ENCODE measurements at regions of chr22 and their contacts with region 1.

Region 1: GRCh38 chr22:39306581-39307361 is 12.7 kb downstream of the RPL3 start:
- DNase-seq: no peak
- ATAC-seq: no peak
- H3K4me3 ChIP-seq: no peak overlapping the region
- H3K27ac ChIP-seq: no peak overlapping the region
- H3K4me1 ChIP-seq: peaks cover 52 to 64% of the 10 kb centered on the region in 2 experiments
- H3K27me3 ChIP-seq: no peaks in the 10 kb centered on the region
- CTCF ChIP-seq: peak in 2 of 3 experiments; percentile 53 to 75; a peak in 4 of 6 replicates
- POLR2A ChIP-seq: no peak
- RAD21 ChIP-seq: no peak

Region 2: DNA sequence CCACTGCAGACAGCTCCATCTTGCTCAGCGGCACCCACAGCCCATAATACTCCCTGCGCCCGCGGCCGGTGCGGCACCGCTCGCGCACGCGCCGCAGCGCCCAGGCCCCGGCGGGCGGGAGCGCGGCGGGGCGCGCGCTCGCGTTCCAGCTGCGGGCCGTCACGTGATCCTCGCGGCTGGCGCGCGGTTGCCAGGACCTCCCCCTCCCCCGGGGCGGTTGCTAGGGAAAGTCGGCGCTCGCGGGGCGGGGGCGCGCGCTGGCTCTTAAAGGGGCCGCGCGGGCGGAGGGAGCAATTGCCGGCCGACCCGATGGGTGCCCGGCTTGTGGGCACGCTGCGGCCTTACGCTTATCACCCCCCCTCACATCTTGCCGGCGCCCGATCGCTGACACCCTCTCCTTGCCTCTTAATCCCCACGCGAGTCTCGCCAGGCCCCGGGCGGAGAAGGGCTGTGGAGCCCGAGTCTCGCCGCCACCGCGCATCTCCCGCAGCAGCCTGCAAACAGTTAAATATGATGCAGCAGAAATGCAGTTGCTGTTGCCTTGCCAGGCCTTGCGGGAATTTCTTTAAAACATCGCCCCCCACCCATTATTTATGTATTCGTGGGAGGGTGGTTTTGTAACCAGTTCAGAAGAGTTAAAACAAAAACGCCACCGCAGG is 434.5 kb before region 1 on chr22 and contains the start of gene CBX6:
- CTCF ChIA-PET with region 1: no interaction called
- POLR2A ChIA-PET with region 1: no interaction called
- RAD21 ChIA-PET with region 1: no interaction called
- intact Hi-C with region 1: loop called (anchors 5 kb)
- DNase-seq: peak; percentile 78
- ATAC-seq: peak; percentile 76
- H3K4me3 ChIP-seq: peak within 1 kb of the TSS; percentile 61 to 86
- H3K27ac ChIP-seq: peak within 1 kb of the TSS; percentile 84
- H3K4me1 ChIP-seq: peaks cover 11 to 45% of the 10 kb centered on the region in 2 experiments
- H3K27me3 ChIP-seq: no peaks in the 10 kb centered on the region
- CTCF ChIP-seq: no peak
- POLR2A ChIP-seq: no peak
- RAD21 ChIP-seq: no peak
- total RNA-seq, gene CBX6: 90.0 TPM

Region 3: DNA sequence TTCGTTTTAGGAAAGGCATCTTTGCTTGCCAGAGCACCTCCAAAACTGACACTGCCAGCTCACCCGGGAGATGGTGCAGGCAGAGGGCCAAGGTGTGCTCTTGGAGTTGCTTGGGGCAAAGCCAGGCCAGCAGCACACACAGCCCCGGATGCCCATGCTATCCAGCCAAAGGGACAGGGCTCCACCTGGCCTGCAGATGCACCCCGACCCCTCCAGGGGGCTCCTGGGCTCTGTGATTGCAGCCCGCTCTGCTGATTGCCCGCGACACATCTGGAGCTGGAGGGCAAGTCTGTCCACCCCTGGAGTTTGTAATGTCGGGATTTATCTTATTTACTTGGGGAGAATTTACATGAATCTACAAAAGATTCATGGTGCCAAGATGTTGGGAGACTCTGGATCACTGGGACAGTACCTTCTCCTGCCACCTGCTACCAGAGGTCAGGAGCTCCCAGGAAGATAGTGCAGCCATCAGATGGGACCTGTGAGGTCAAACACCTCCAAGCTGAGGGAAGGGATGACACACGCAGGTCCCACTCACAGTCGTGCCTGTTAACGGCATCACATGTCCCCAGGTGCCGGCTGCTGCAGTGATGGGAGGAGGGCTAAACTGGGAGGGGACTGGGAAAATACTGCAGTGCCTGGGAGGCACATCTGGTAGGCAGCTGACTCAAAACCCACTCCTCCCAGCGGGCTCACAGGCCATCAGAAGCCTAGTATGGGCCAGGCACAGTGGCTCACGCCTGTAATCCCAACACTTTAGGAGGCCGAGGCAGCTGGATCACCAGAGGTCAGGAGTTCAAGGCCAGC is 171.5 kb before region 1 on chr22:
- CTCF ChIA-PET with region 1: interaction called, 19 read pairs
- POLR2A ChIA-PET with region 1: interaction called, 5 read pairs
- RAD21 ChIA-PET with region 1: interaction called in 1 of 2 experiments, 6 read pairs
- intact Hi-C with region 1: loop called (anchors 1 kb)
- DNase-seq: peak; percentile 7
- ATAC-seq: peak; percentile 95
- H3K4me3 ChIP-seq: no peak overlapping the region
- H3K27ac ChIP-seq: no peak overlapping the region
- H3K4me1 ChIP-seq: no peaks in the 10 kb centered on the region; a peak in 1 of 4 replicates
- H3K27me3 ChIP-seq: no peaks in the 10 kb centered on the region
- CTCF ChIP-seq: peak; percentile 55 to 81 (median 76)
- POLR2A ChIP-seq: no peak
- RAD21 ChIP-seq: peak; percentile 80

Region 4: GRCh38 chr22:39197396-39197977 is 109.3 kb before region 1 on chr22:
- CTCF ChIA-PET with region 1: no interaction called
- POLR2A ChIA-PET with region 1: no interaction called
- RAD21 ChIA-PET with region 1: no interaction called
- intact Hi-C with region 1: no loop called
- DNase-seq: no peak
- ATAC-seq: no peak
- H3K4me3 ChIP-seq: no peak overlapping the region
- H3K27ac ChIP-seq: no peak overlapping the region
- H3K4me1 ChIP-seq: peaks cover under 1% of the 10 kb centered on the region in 2 experiments; a peak in 1 of 4 replicates
- H3K27me3 ChIP-seq: no peaks in the 10 kb centered on the region
- CTCF ChIP-seq: no peak
- POLR2A ChIP-seq: no peak
- RAD21 ChIP-seq: no peak

Region 5: DNA sequence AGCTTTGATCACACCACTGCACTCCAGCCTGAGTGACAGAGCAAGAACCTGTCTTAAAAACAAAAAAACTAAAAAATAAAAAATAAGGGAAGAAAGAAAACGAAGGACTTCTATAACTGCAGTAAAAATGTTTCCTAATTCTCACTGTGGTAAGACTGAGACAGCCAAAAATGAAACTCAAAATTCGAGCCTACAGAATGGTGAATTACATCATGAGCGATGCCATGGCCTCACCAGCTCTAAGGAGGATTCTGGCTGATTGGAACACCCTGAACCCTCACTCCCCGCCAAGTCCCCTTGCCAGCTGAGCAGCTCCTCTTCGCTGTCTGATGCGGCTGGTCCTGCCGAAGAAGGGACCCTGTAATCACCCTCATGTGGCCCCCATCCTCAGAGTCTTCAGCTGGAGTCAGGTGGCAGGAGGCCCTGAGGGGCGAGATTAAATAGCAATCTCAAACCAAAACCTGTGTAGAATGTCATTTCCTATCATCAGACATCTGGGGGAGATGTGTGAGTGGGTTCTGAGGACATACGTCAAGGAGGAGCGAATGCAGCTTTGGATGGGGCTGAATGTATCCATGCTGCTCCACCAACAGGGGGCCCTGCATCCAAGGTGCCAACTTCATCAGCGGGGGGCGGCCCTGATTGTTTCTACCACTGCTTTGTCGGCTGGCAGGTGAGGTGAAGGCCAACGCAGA is 91.2 kb before region 1 on chr22:
- CTCF ChIA-PET with region 1: interaction called, 9 read pairs
- POLR2A ChIA-PET with region 1: interaction called, 10 read pairs
- RAD21 ChIA-PET with region 1: interaction called, 3 read pairs
- intact Hi-C with region 1: no loop called
- DNase-seq: peak; percentile 35
- ATAC-seq: peak; percentile 42
- H3K4me3 ChIP-seq: no peak overlapping the region
- H3K27ac ChIP-seq: peak overlapping the region; percentile 58; the same call in 1 of the 2 replicates
- H3K4me1 ChIP-seq: peaks cover 46 to 57% of the 10 kb centered on the region in 2 experiments
- H3K27me3 ChIP-seq: no peaks in the 10 kb centered on the region
- CTCF ChIP-seq: peak; percentile 57 to 86 (median 73); a peak in 5 of 6 replicates
- POLR2A ChIP-seq: no peak
- RAD21 ChIP-seq: peak; percentile 62

Region 6: DNA sequence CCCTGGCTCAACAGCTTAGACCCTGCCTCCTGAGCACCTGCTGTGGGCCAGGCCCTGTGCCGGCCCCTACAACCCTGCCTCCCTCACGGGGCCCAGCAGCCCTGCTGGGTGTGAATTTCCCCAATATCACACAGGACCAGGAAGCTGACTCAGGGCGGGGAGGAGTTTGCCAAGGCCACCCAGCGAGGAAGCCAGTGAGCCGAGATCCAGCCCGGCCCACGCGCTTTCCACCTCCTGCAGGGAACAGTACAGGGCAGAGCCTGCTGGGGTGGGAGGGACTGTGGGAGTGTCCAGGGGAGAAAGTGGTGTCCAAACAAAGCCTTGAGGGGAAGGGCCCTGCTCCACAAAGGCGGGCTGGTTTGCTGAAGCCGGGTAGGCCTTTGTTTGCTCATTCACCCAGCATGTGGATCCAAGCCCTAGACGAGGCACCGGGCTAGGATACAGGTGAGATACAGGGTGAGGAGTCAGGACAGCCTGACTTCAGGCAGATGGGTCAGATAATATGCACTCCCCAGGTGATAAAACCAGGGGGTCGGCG is 14.1 kb before region 1 on chr22:
- CTCF ChIA-PET with region 1: interaction called, 11 read pairs
- POLR2A ChIA-PET with region 1: interaction called, 11 read pairs
- RAD21 ChIA-PET with region 1: interaction called, 4 to 5 read pairs
- intact Hi-C with region 1: no loop called
- DNase-seq: peak; percentile 93
- ATAC-seq: peak; percentile 82
- H3K4me3 ChIP-seq: peak overlapping the region; percentile 18 to 41
- H3K27ac ChIP-seq: peak overlapping the region; percentile 98
- H3K4me1 ChIP-seq: peaks cover 61 to 95% of the 10 kb centered on the region in 2 experiments
- H3K27me3 ChIP-seq: no peaks in the 10 kb centered on the region
- CTCF ChIP-seq: no peak
- POLR2A ChIP-seq: peak; percentile 86
- RAD21 ChIP-seq: no peak

Region 7: GRCh38 chr22:39395936-39396796 is 89.4 kb after region 1 on chr22:
- CTCF ChIA-PET with region 1: no interaction called
- POLR2A ChIA-PET with region 1: no interaction called
- RAD21 ChIA-PET with region 1: no interaction called
- intact Hi-C with region 1: no loop called
- DNase-seq: no peak
- ATAC-seq: no peak
- H3K4me3 ChIP-seq: no peak overlapping the region
- H3K27ac ChIP-seq: no peak overlapping the region
- H3K4me1 ChIP-seq: peaks cover 0 to 11% of the 10 kb centered on the region in 2 experiments; a peak in 1 of 4 replicates
- H3K27me3 ChIP-seq: no peaks in the 10 kb centered on the region
- CTCF ChIP-seq: no peak
- POLR2A ChIP-seq: no peak
- RAD21 ChIP-seq: no peak